ENCODE measurements at regions of chr2 and their contacts with region 1.

Region 1: GRCh38 chr2:181457121-181457740 is at the start of gene ITGA4:
- DNase-seq: peak; percentile 97
- H3K4me3 Mint-ChIP-seq: peak within 1 kb of the TSS; percentile 89
- H3K27ac Mint-ChIP-seq: peak within 1 kb of the TSS; percentile 93
- H3K4me1 Mint-ChIP-seq: peaks cover 45% of the 10 kb centered on the region
- H3K27me3 Mint-ChIP-seq: no peaks in the 10 kb centered on the region
- total RNA-seq, gene ITGA4: 106 and 109 TPM in 2 replicates

Region 2: GRCh38 chr2:181104512-181105115 is 352.6 kb before region 1 on chr2:
- intact Hi-C with region 1: loop called (anchors 1 kb)
- DNase-seq: peak; percentile 79
- H3K4me3 Mint-ChIP-seq: peak overlapping the region; percentile 13
- H3K27ac Mint-ChIP-seq: peak overlapping the region; percentile 30
- H3K4me1 Mint-ChIP-seq: peaks cover 43% of the 10 kb centered on the region
- H3K27me3 Mint-ChIP-seq: no peaks in the 10 kb centered on the region

Region 3: DNA sequence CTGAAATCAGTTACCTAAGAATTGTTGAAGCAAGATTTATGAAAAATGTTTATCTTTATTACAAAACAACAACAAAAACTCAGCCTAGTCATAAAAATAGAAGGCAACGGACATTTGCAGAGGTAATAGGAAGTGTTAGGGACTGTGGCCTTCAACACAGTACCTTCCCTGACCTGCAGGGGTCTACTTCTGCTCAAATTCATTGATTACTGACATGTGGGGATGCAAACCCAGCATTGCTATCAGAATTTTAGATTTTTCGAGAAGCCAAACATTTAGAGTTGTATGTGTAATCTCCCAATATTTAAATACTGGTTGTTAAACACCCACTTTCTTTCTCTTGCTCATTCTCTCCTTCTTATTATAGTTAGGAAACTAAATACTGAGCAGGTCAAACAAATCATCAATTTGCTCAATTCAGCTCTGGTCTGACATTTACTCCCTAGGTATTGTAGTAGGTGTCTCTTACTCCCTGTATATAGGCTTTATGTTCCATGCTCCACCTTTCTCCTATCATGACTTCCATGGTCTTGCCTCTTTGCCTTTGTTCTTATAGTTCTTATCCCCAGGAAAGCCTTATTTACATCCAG is 278.3 kb before region 1 on chr2:
- intact Hi-C with region 1: loop called (anchors 5 kb)
- DNase-seq: peak; percentile 75
- H3K4me3 Mint-ChIP-seq: peak overlapping the region; percentile 30
- H3K27ac Mint-ChIP-seq: peak overlapping the region; percentile 86
- H3K4me1 Mint-ChIP-seq: peaks cover 40% of the 10 kb centered on the region
- H3K27me3 Mint-ChIP-seq: no peaks in the 10 kb centered on the region

Region 4: GRCh38 chr2:181312515-181312927 is 144.7 kb before region 1 on chr2:
- intact Hi-C with region 1: loop called (anchors 1 kb)
- DNase-seq: peak; percentile 84
- H3K4me3 Mint-ChIP-seq: peak overlapping the region; percentile 83
- H3K27ac Mint-ChIP-seq: peak overlapping the region; percentile 98
- H3K4me1 Mint-ChIP-seq: peaks cover 40% of the 10 kb centered on the region
- H3K27me3 Mint-ChIP-seq: no peaks in the 10 kb centered on the region

Region 5: DNA sequence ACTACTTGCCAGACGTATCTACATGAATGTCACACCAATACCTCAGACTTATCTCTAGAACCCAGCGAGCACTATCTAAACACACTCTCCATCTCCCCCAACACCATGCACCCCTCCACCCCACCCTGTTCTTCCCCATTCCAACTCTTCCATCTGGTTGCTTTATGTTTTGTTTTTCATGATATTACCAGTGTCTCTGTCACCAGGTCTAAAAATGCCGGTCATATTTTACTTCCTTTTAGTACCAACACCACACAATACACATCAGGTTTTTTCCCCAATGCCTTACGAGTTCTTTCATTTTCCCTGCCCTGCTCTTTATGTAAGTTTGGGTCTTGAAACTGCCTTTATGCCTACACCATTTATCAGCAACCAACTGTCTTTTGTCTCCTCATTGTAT is 10.2 kb before region 1 on chr2:
- intact Hi-C with region 1: loop called (anchors 1 kb)
- DNase-seq: no peak
- H3K4me3 Mint-ChIP-seq: peak overlapping the region; percentile 43
- H3K27ac Mint-ChIP-seq: peak overlapping the region; percentile 81
- H3K4me1 Mint-ChIP-seq: peaks cover 16% of the 10 kb centered on the region
- H3K27me3 Mint-ChIP-seq: peaks cover 3% of the 10 kb centered on the region